ENCODE measurements at regions of chr19 and their contacts with region 1.

Region 1: DNA sequence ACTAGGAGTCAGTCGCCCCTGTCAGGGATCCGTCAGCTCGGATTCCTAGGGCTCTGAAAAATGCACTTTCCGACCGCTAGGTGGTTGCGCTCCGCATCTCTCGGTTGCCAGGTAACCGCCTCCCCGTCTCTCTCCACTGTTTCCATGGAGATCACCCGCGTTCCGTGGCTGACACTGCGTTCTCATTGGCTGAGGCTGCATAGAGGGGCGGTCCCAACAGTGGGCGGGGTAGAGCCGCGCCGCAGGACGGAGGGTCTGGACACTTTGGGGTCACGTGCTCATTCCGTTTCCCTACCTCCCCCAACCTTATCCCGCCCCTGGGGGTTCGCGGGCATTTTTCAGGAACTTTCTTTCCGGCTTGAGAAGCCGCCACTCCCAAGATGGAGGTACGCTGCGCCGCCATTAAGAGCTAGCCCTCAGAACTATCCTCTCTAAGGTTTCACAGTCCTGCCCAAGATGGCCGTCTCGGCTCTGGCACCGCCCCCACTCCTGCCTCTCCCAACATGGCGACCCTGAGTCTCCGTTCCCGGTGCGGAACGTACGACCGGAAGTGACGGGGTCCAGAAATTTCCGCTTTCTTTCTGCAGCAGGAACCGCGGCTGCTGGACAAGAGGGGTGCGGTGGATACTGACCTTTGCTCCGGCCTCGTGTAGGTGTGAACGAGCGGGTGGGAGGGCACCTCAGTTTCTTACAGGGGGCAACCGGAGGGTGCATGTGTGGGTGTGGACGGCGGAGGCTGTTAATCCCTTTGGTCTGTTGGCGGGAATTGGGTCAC is at the starts of genes ODAD3 and PRKCSH:
- DNase-seq: peak; percentile 99
- H3K4me3 Mint-ChIP-seq: peak within 1 kb of the TSS; percentile 99
- H3K27ac Mint-ChIP-seq: peak within 1 kb of the TSS; percentile 96
- H3K4me1 Mint-ChIP-seq: peaks cover 19% of the 10 kb centered on the region
- H3K27me3 Mint-ChIP-seq: peaks cover 6% of the 10 kb centered on the region
- total RNA-seq, gene ODAD3: not detected in 2 replicates
- total RNA-seq, gene PRKCSH: 322 and 334 TPM in 2 replicates

Region 2: DNA sequence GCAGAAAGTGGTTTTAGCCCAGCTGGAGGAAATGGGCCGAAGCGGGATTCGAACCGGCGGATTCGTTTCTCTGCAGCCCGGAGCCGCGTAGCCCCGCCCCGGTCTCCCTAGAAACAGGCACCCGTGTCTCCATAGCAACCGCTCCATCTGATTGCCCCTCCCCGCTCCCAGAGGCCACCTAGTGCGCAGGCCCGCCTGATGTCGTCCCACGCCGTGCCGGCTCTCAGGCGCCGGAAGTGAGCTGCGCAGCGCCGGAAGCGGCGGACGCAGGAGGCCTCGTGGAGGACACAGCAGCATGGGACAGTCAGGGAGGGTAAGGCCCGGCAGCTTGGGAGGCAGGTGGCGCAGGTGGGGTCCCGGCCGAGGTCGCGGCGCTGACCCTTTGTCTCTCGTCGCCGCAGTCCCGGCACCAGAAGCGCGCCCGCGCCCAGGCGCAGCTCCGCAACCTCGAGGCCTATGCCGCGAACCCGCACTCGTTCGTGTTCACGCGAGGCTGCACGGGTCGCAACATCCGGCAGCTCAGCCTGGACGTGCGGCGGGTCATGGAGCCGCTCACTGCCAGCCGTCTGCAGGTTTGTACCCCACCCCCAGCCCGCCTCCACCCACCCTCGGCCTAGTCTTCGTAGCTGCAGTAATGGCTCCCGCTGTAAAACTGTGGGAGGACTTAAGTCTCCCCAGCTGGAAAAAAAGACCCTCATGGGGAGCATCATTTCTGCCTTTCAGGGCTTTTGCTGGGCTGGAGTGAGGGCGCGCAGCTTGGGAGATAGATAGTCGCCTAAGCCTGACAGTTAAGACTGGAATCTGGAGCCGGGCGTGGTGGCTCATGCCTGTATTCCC is 1328.9 kb before region 1 on chr19 and contains the start of gene PPAN:
- intact Hi-C with region 1: loop called (anchors 10 kb)
- DNase-seq: peak; percentile 97
- H3K4me3 Mint-ChIP-seq: peak within 1 kb of the TSS; percentile 97
- H3K27ac Mint-ChIP-seq: peak within 1 kb of the TSS; percentile 99
- H3K4me1 Mint-ChIP-seq: peaks cover 60% of the 10 kb centered on the region
- H3K27me3 Mint-ChIP-seq: peaks cover 1% of the 10 kb centered on the region
- total RNA-seq, gene PPAN: 234 and 250 TPM in 2 replicates

Region 3: DNA sequence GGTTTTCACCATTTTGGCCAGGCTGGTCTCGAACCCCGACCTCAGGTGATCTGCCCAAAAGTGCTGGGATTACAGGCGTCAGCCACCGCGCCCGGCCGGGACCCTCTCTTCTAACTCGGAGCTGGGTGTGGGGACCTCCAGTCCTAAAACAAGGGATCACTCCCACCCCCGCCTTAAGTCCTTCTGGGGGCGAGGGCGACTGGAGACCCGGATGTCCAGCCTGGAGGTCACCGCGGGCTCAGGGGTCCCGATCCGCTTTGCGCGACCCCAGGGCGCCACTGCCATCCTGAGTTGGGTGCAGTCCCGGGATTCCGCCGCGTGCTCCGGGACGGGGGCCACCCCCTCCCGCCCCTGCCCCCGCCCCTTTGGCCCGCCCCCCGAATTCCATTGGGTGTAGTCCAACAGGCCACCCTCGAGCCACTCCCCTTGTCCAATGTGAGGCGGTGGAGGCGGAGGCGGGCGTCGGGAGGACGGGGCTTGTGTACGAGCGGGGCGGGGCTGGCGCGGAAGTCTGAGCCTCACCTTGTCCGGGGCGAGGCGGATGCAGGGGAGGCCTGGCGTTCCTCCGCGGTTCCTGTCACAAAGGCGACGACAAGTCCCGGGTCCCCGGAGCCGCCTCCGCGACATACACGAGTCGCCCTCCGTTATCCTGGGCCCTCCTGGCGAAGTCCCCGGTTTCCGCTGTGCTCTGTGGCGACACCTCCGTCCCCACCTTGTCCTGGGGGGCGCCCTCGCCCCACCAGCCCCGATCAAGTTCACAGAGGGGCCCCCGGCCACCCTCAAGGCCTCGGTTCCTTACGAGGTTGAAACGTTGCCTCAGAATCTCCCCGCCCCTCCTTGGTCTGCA is 345.0 kb before region 1 on chr19:
- intact Hi-C with region 1: loop called (anchors 1 kb)
- DNase-seq: peak; percentile 97
- H3K4me3 Mint-ChIP-seq: peak overlapping the region; percentile 98
- H3K27ac Mint-ChIP-seq: peak overlapping the region; percentile 99
- H3K4me1 Mint-ChIP-seq: peaks cover 45% of the 10 kb centered on the region
- H3K27me3 Mint-ChIP-seq: no peaks in the 10 kb centered on the region

Region 4: DNA sequence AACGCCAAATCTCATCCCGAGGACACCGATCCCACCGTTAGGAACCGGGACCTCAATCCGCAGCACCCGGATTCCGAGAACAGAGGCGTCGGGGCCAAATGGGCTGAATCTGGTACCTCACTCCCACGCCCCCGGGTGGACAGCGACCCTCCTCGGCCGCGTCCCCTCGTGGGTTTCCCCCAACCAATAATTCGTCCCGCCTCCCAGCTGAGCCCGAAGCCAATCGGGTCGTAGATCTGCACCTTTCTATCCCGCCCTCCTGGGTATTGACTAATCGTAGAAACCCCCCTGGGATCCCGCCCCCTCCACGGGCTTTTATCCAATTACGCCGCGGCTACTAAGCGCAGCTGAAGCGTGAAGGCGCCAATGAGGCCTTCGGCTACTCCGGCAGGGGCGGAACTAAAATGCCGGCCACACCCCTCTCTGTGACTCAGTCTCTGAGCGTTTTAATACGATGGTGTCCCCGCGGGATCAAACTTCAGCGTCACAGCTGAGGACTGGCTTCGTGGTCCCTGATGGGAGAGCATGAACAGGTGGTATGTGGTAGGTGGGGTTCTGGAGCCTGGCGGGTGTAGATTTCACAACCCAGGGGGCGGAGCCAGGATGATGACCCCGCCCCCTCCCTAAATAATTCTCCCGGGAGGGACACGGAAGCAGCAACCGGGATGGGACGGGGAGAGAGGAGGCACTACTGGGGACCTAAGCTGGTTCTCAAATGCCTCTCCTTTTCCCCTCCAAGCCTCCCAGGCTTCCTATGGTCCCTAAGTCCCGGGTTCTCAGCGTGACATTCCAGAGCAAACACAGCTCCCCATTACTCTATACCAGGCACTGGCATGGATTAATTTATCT is 88.9 kb before region 1 on chr19 and contains the starts of genes CCDC159 and TMEM205:
- intact Hi-C with region 1: loop called (anchors 1 kb)
- DNase-seq: peak; percentile 98
- H3K4me3 Mint-ChIP-seq: peak within 1 kb of the TSS; percentile 89
- H3K27ac Mint-ChIP-seq: peak within 1 kb of the TSS; percentile 93
- H3K4me1 Mint-ChIP-seq: peaks cover 28% of the 10 kb centered on the region
- H3K27me3 Mint-ChIP-seq: no peaks in the 10 kb centered on the region
- total RNA-seq, gene CCDC159: 10.7 and 14.4 TPM in 2 replicates
- total RNA-seq, gene TMEM205: 26.6 and 31.2 TPM in 2 replicates

Region 5: GRCh38 chr19:11361037-11361770 is 74.0 kb before region 1 on chr19:
- intact Hi-C with region 1: no loop called
- DNase-seq: no peak
- H3K4me3 Mint-ChIP-seq: no peak overlapping the region
- H3K27ac Mint-ChIP-seq: no peak overlapping the region
- H3K4me1 Mint-ChIP-seq: peaks cover 4% of the 10 kb centered on the region
- H3K27me3 Mint-ChIP-seq: peaks cover 11% of the 10 kb centered on the region

Region 6: DNA sequence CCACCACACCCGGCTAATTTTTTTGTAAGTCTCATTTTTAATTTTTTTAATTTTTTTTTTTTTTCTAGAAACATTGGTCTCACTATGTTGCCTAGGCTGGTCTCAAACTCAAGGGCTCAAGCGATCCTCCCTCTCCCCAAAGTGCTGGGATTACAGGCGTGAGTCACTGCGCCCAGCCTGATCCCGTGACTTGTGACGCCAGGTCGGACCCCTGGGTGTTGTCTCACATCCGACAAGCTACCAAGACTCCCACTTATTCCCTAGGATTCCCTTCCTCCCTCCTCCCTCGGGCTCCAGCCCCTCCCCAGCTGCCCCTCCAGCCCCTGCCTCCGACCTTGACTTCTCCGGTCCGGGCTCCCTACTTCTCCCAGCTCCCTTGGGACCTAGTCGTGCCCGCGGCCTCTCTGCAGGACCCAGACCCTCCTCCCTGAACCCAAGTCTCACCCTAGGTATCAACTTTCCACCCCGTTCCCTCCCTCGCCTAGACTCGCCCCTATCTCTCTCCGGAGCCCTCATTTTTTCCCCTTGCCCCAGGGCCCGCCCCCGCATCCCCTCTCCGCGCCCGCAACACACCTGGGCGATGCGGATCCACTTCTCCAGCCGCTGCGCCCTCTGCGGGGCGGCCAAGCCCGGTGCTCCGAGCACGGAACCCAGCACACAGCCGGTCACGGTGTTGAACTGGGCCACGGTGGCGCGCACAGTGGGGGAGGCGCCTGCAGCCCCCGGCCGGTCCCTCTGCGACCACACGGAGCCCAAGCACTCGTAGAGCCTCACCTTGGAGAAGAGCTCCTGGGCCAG is 29.2 kb before region 1 on chr19:
- intact Hi-C with region 1: no loop called
- DNase-seq: no peak
- H3K4me3 Mint-ChIP-seq: no peak overlapping the region
- H3K27ac Mint-ChIP-seq: no peak overlapping the region
- H3K4me1 Mint-ChIP-seq: no peaks in the 10 kb centered on the region
- H3K27me3 Mint-ChIP-seq: peaks cover 15% of the 10 kb centered on the region

Region 7: GRCh38 chr19:11422163-11423021 is 12.9 kb before region 1 on chr19:
- intact Hi-C with region 1: loop called (anchors 1 kb)
- DNase-seq: peak; percentile 67
- H3K4me3 Mint-ChIP-seq: peak overlapping the region; percentile 72
- H3K27ac Mint-ChIP-seq: no peak overlapping the region
- H3K4me1 Mint-ChIP-seq: peaks cover 31% of the 10 kb centered on the region
- H3K27me3 Mint-ChIP-seq: peaks cover 64% of the 10 kb centered on the region

Region 8: DNA sequence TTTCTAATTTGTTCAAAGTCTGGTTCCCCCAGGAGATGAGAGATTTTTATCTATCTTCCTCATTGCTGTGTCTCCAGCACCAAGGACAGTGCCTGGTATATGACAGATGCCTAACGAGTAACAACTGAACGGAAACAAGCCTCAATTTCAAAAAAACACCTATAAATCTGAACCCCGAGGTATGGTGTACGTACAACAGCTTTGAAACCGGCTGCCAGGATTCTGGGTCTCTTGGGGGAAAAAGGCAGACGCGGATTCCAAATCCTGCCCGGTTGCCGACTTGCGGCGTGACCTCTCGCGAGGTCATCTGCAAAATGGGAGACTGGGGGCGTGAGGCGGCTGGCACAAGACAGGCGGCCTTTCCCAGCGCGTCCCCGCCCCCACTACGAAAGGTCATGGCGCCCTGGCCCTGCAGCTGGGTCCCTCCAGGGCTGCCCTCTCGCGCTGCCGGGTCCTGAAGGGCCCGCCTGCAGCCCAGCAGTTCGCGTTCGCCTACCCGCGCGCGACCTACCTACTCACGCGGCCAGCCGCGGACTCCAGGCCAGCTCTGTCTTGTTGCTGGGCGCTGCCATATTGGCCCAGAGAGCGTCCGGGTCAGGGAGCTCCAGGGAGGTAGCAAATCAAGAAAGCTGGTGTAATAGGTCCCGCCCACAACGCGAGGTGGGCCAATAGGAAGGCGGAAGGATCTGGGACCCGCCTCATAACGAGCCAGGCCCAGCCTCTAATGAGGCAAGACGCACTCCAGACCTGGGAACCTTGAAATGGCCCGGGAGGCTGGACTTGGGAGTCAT is 93.5 kb after region 1 on chr19 and contains the start of gene ECSIT:
- intact Hi-C with region 1: loop called (anchors 1 kb)
- DNase-seq: peak; percentile 89
- H3K4me3 Mint-ChIP-seq: peak within 1 kb of the TSS; percentile 95
- H3K27ac Mint-ChIP-seq: peak within 1 kb of the TSS; percentile 92
- H3K4me1 Mint-ChIP-seq: peaks cover 28% of the 10 kb centered on the region
- H3K27me3 Mint-ChIP-seq: no peaks in the 10 kb centered on the region
- total RNA-seq, gene ECSIT: 37.3 and 38.8 TPM in 2 replicates